ENCODE measurements at regions of chr1 and their contacts with region 1.

Region 1: DNA sequence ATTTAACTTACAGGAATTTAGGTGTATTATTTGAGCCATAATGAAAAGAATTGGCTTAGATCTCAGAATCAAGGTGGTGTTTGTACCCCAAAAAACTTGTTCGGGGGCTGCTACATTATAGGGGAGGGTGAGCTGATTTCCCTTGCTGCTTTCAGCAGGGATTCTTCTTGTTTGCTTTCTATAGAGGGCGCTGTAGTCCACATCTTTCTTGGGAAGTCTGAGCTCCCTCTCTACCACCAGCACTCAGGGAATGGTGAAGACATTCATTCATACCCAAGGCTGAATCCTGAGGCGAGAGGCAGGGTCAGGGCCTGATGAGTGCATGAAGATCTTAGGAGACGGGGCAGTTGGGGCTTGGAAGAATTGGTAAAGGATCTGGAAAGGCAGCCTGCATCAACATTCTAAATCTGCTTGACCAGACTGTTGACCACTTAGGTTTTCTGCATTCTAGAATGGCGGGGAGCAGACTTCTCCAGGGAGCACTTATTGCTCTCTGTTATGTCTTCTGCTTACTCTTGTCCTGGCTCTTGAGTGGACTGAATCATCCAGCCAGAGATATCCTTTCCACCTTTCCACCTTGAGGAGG is 18.9 kb downstream of the SPATA46 start:
- DNase-seq: peak; percentile 33
- H3K4me3 ChIP-seq: no peak overlapping the region
- H3K27ac ChIP-seq: no peak overlapping the region
- H3K4me1 ChIP-seq: no peaks in the 10 kb centered on the region
- H3K27me3 ChIP-seq: no peaks in the 10 kb centered on the region
- CTCF ChIP-seq: peak; percentile 51 to 72

Region 2: DNA sequence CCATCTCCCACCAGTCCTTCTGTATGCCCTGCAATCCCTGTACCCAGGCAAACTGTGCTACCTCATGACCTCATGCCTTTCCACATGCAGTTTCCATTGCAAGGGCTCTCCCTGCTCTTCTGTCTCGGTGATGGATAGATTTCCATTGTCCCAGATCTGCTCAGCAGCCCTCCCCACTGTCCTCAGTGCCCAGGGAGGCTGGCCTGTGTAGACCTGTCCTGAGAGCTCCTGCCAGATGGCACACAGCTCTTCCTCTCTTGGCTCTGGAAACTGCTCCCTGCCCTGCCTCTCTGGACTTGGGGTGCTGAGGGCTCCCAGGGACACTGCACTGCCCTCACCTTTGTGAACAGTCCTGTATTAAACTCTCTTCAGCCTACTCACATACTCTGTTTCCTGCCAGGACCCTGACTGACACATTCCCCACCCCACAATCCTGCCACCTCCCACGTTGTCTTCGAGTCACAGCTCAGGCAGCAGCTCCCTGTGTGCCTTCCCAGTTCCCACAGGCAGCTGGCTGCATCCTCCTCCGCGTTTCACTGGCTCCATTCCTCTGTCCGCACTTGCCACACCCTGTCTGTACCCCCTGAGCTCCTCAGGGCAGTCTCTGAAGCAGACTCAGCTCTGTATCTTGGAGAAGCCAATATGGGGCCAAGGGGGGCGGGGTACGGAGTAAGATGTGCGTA is 38.1 kb before region 1 on chr1:
- CTCF ChIA-PET with region 1: no interaction called
- dilution Hi-C with region 1: no loop called
- in situ Hi-C with region 1: no loop called
- intact Hi-C with region 1: no loop called
- DNase-seq: peak; percentile 74
- H3K4me3 ChIP-seq: no peak overlapping the region
- H3K27ac ChIP-seq: no peak overlapping the region
- H3K4me1 ChIP-seq: peaks cover 12% of the 10 kb centered on the region
- H3K27me3 ChIP-seq: no peaks in the 10 kb centered on the region
- CTCF ChIP-seq: no peak

Region 3: DNA sequence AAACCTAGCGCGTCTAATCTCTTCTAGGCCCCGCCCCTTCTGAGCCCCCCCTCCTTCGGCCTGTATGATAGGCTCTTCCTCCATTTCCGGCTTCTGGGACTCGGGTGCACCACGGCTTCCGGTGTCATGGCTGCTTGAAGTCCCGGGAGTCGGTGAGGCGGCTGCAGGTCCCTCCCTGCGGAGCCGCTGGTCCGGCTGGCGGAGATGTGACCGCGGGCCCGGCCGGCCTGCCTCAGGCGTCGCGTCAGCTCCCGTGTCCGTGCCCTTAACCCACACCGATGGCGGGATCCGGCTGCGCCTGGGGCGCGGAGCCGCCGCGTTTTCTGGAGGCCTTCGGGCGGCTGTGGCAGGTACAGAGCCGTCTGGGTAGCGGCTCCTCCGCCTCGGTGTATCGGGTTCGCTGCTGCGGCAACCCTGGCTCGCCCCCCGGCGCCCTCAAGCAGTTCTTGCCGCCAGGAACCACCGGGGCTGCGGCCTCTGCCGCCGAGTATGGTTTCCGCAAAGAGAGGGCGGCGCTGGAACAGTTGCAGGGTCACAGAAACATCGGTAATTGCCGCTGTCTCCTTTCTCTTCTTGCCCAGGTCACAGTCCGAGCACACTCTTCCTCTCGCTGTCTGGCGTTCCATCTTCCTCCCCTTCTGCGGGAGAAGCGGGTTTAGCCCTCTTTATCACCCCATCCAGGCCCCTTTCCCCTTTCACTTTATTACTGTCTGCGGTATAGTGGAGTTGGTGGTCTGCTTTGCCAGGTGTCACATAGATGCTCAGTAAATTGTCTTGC is 140.1 kb after region 1 on chr1 and contains the start of gene UHMK1:
- CTCF ChIA-PET with region 1: no interaction called
- dilution Hi-C with region 1: no loop called
- in situ Hi-C with region 1: no loop called
- intact Hi-C with region 1: loop called (anchors 5 kb)
- DNase-seq: peak; percentile 84
- H3K4me3 ChIP-seq: peak within 1 kb of the TSS; percentile 80 to 96 (median 81)
- H3K27ac ChIP-seq: peak within 1 kb of the TSS; percentile 67
- H3K4me1 ChIP-seq: peaks cover 12% of the 10 kb centered on the region
- H3K27me3 ChIP-seq: no peaks in the 10 kb centered on the region
- CTCF ChIP-seq: peak in 1 of 2 donors; percentile 2
- total RNA-seq, gene UHMK1: 59.5 to 97.5 TPM

Region 4: GRCh38 chr1:162612606-162613400 is 255.0 kb after region 1 on chr1:
- CTCF ChIA-PET with region 1: no interaction called
- dilution Hi-C with region 1: no loop called
- in situ Hi-C with region 1: no loop called
- intact Hi-C with region 1: loop called (anchors 5 kb)
- DNase-seq: no peak
- H3K4me3 ChIP-seq: no peak overlapping the region
- H3K27ac ChIP-seq: no peak overlapping the region
- H3K4me1 ChIP-seq: no peaks in the 10 kb centered on the region
- H3K27me3 ChIP-seq: no peaks in the 10 kb centered on the region
- CTCF ChIP-seq: no peak